Activated naive CD4-positive, alpha-beta T cell treated with anti-CD3 and anti-CD28 coated beads for 36 hours (primary cell): ENCODE measurements at regions of chr16 and their contacts with region 1.

Region 1: GRCh38 chr16:30650369-30651123 is at the start of gene PRR14:
- DNase-seq: peak; percentile 100
- H3K4me3 Mint-ChIP-seq: peak within 1 kb of the TSS; percentile 85
- H3K27ac Mint-ChIP-seq: peak within 1 kb of the TSS; percentile 91
- H3K4me1 Mint-ChIP-seq: peaks cover 22% of the 10 kb centered on the region
- H3K27me3 Mint-ChIP-seq: no peaks in the 10 kb centered on the region
- total RNA-seq, gene PRR14: 50.6 to 52.4 TPM

Region 2: GRCh38 chr16:30370444-30371247 is 279.9 kb before region 1 on chr16 and contains the start of gene TBC1D10B:
- CTCF ChIA-PET with region 1: no interaction called
- intact Hi-C with region 1: loop called (anchors 1 kb)
- DNase-seq: peak; percentile 100
- H3K4me3 Mint-ChIP-seq: peak within 1 kb of the TSS; percentile 94
- H3K27ac Mint-ChIP-seq: peak within 1 kb of the TSS; percentile 98
- H3K4me1 Mint-ChIP-seq: peaks cover 40% of the 10 kb centered on the region
- H3K27me3 Mint-ChIP-seq: no peaks in the 10 kb centered on the region
- total RNA-seq, gene TBC1D10B: 36.6 to 38.4 TPM

Region 3: GRCh38 chr16:30585400-30586189 is 65.0 kb before region 1 on chr16 and contains the start of gene ZNF785:
- CTCF ChIA-PET with region 1: no interaction called
- intact Hi-C with region 1: loop called (anchors 2 kb)
- DNase-seq: peak; percentile 98
- H3K4me3 Mint-ChIP-seq: peak within 1 kb of the TSS; percentile 90
- H3K27ac Mint-ChIP-seq: peak within 1 kb of the TSS; percentile 90
- H3K4me1 Mint-ChIP-seq: peaks cover 32% of the 10 kb centered on the region
- H3K27me3 Mint-ChIP-seq: no peaks in the 10 kb centered on the region
- total RNA-seq, gene ZNF785: 11.9 to 13.2 TPM

Region 4: GRCh38 chr16:30628627-30629540 is 21.7 kb before region 1 on chr16:
- CTCF ChIA-PET with region 1: interaction called, 5 read pairs
- intact Hi-C with region 1: loop called (anchors 1 kb)
- DNase-seq: peak; percentile 97
- H3K4me3 Mint-ChIP-seq: peak overlapping the region; percentile 55
- H3K27ac Mint-ChIP-seq: peak overlapping the region; percentile 82
- H3K4me1 Mint-ChIP-seq: peaks cover 8% of the 10 kb centered on the region
- H3K27me3 Mint-ChIP-seq: no peaks in the 10 kb centered on the region

Region 5: DNA sequence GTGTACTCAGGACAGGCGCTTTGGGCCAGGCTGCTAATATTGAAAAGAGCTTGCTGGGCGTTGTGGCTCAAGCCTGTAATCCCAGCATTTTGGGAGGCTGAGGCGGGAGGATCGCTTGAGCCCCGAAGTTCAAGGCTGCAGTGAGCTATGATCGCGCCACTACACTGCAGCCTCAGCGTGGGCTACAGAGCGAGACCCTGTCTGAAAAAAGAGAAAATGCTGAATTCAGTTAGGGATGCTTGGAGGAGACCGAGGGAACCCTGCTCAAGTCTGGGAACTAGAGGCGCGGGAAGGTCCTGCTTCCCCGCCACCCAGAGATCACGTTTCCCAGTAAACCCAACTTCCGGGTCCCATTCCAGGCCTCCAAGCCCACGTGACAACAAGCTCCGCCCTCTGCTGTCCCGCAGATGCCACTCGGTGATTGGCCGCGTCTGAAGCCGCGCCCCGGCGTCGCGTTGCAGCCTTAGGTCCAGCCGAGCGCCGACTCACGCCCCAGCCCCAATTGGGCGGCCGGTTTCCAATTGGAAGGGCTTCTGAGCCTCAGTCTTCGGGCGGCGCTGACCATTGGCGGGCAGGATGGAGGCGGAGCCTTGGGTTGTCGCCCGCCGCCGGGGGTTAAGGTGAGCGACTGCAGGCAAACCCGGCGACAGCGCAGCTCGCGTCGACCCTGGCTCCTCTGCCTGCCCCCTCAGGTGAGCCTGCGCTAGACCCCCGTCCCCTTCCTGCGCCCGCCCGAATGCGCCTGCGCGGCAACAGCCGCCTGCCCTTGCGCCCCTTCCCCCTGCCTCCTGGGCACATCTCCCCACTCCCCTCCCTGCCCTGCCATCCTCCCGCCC is 97.5 kb after region 1 on chr16 and contains the start of gene PHKG2:
- CTCF ChIA-PET with region 1: no interaction called
- intact Hi-C with region 1: loop called (anchors 1 kb)
- DNase-seq: peak; percentile 99
- H3K4me3 Mint-ChIP-seq: peak within 1 kb of the TSS; percentile 89
- H3K27ac Mint-ChIP-seq: peak within 1 kb of the TSS; percentile 86
- H3K4me1 Mint-ChIP-seq: peaks cover 19% of the 10 kb centered on the region
- H3K27me3 Mint-ChIP-seq: no peaks in the 10 kb centered on the region
- total RNA-seq, gene PHKG2: 23.3 to 26.4 TPM